CD4-positive, alpha-beta memory T cell (primary cell): ENCODE measurements at regions of chr1 and their contacts with region 1.

Region 1: DNA sequence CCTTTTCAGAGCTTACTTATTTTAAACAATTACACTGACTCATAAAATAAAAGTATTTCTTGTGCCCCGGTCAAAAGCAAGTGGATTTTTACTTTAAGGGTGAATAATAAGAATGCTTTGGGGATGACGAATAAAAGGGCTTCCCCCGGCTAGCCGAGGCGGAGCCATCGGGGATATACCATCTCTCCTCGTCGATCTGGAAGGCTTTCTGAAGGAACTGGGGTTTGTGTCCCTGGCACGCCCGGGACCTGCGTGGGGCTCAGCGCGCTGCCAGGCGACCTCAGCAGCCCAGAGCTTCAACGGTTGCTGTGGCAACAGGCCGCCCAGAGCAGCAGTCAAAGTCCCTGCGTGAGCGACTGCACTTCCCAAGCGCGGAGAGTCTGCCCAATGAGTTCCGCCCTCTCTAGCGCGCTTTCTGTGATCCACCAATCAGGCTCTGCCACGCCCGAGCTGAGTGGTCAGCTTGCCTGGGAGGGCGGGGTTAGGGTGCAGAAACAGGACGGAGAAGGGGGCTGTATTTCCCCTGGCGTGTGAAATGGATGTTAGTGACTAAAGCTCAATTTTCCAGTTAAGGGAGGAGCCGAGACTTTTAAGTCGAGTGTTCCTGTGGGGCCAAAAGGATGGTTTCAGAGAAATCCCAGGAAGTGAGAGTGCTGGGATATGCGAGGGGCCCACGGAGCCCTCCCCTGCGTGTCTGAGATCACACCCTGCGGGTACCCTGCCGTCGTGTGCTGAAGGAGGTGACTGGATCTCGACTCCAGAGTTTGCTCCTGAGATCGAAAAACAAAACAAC is 33.0 kb upstream of the MGST3 start:
- DNase-seq: peak; percentile 84 to 91 (median 86)
- H3K4me3 ChIP-seq: peak overlapping the region; percentile 59 to 71
- H3K4me3 Mint-ChIP-seq: peak overlapping the region; percentile 88 to 92 (median 90)
- H3K27ac ChIP-seq: peak overlapping the region; percentile 7
- H3K27ac Mint-ChIP-seq: peak overlapping the region; percentile 80 to 95 (median 91)
- H3K4me1 ChIP-seq: peaks cover 18% of the 10 kb centered on the region
- H3K4me1 Mint-ChIP-seq: peaks cover 18 to 30% (median 24%) of the 10 kb centered on the region in 4 donors
- H3K27me3 ChIP-seq: peaks cover 22% of the 10 kb centered on the region
- H3K27me3 Mint-ChIP-seq: peaks cover 17 to 30% of the 10 kb centered on the region in 2 donors

Region 2: GRCh38 chr1:165392634-165393571 is 205.2 kb before region 1 on chr1:
- CTCF ChIA-PET with region 1: interaction called, 275 read pairs
- POLR2A ChIA-PET with region 1: interaction called, 33 read pairs
- intact Hi-C with region 1: loop called (anchors 1 kb)
- DNase-seq: peak; percentile 91 to 93 (median 92)
- H3K4me3 ChIP-seq: peak overlapping the region in 1 of 2 donors; percentile 4
- H3K4me3 Mint-ChIP-seq: peak overlapping the region; percentile 63 to 84 (median 81)
- H3K27ac ChIP-seq: no peak overlapping the region
- H3K27ac Mint-ChIP-seq: peak overlapping the region; percentile 67 to 93 (median 83)
- H3K4me1 ChIP-seq: peaks cover 23% of the 10 kb centered on the region
- H3K4me1 Mint-ChIP-seq: peaks cover 14 to 26% (median 20%) of the 10 kb centered on the region in 4 donors
- H3K27me3 ChIP-seq: peaks cover 39% of the 10 kb centered on the region
- H3K27me3 Mint-ChIP-seq: peaks cover 40 to 53% of the 10 kb centered on the region in 2 donors

Region 3: DNA sequence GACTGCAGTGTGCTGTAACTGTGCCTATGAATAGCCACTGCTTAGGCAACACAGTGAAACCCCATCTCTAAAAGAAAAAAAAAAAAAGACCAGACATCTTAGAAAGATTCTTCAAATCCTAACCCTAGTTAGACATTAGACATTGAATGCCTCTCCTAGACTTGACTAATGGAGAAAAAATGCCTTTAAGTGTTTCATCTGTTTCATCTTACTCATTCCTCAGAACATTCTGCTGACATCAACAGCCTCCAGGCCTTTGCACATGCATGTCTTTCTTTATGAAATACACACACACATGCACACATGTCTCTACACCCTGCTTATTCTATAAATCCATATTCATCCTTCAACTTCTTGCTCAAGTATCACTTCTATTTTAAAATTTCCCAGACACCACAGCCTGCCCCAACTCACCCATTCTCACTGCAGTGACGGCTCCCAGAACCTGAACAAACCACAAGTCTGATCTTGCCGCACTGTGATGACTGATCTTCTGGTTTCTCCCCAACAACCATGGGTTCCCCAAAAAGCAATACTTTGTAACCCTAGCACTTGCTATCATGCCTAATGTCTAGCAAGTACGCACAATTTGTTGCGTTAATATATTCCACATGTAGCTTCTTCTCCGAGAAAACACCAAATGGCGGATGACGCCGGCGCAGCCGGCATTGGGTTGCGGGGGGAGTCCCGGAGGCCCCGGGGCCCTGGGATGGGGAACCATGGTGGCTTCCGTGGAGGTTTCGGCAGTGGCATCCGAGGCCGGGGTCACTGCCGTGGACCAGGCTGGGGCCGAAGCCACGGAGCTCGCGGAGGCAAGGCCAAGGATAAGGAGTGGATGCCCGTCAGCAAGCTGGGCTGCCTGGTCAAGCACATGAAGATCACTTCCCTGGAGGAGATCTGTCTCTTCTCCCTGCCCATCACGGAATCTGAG is 16.9 kb before region 1 on chr1:
- CTCF ChIA-PET with region 1: interaction called, 10 read pairs
- POLR2A ChIA-PET with region 1: no interaction called
- intact Hi-C with region 1: no loop called
- DNase-seq: no peak
- H3K4me3 ChIP-seq: no peak overlapping the region
- H3K4me3 Mint-ChIP-seq: peak overlapping the region in 1 of 8 donors; percentile 6
- H3K27ac ChIP-seq: no peak overlapping the region
- H3K27ac Mint-ChIP-seq: no peak overlapping the region
- H3K4me1 ChIP-seq: no peaks in the 10 kb centered on the region
- H3K4me1 Mint-ChIP-seq: no peaks in the 10 kb centered on the region
- H3K27me3 ChIP-seq: no peaks in the 10 kb centered on the region
- H3K27me3 Mint-ChIP-seq: peaks cover 9 to 17% of the 10 kb centered on the region in 2 donors

Region 4: GRCh38 chr1:165697881-165698760 is 100.0 kb after region 1 on chr1 and contains the start of gene ALDH9A1:
- CTCF ChIA-PET with region 1: interaction called, 23 read pairs
- POLR2A ChIA-PET with region 1: interaction called, 3 read pairs
- intact Hi-C with region 1: loop called (anchors 2 kb)
- DNase-seq: peak; percentile 86 to 91 (median 87)
- H3K4me3 ChIP-seq: peak within 1 kb of the TSS; percentile 95 to 97
- H3K4me3 Mint-ChIP-seq: peak within 1 kb of the TSS; percentile 92 to 100 (median 98)
- H3K27ac ChIP-seq: peak within 1 kb of the TSS; percentile 79
- H3K27ac Mint-ChIP-seq: peak within 1 kb of the TSS; percentile 91 to 99 (median 97)
- H3K4me1 ChIP-seq: peaks cover 21% of the 10 kb centered on the region
- H3K4me1 Mint-ChIP-seq: peaks cover 15 to 39% (median 27%) of the 10 kb centered on the region in 4 donors
- H3K27me3 ChIP-seq: no peaks in the 10 kb centered on the region
- H3K27me3 Mint-ChIP-seq: no peaks in the 10 kb centered on the region
- total RNA-seq, gene ALDH9A1: 45.2 to 47.1 TPM

Region 5: GRCh38 chr1:165793951-165794350 is 195.9 kb after region 1 on chr1:
- CTCF ChIA-PET with region 1: no interaction called
- POLR2A ChIA-PET with region 1: no interaction called
- intact Hi-C with region 1: no loop called
- DNase-seq: no peak
- H3K4me3 ChIP-seq: no peak overlapping the region
- H3K4me3 Mint-ChIP-seq: no peak overlapping the region
- H3K27ac ChIP-seq: no peak overlapping the region
- H3K27ac Mint-ChIP-seq: no peak overlapping the region
- H3K4me1 ChIP-seq: no peaks in the 10 kb centered on the region
- H3K4me1 Mint-ChIP-seq: no peaks in the 10 kb centered on the region
- H3K27me3 ChIP-seq: no peaks in the 10 kb centered on the region
- H3K27me3 Mint-ChIP-seq: peaks cover 6 to 13% of the 10 kb centered on the region in 2 donors

Region 6: DNA sequence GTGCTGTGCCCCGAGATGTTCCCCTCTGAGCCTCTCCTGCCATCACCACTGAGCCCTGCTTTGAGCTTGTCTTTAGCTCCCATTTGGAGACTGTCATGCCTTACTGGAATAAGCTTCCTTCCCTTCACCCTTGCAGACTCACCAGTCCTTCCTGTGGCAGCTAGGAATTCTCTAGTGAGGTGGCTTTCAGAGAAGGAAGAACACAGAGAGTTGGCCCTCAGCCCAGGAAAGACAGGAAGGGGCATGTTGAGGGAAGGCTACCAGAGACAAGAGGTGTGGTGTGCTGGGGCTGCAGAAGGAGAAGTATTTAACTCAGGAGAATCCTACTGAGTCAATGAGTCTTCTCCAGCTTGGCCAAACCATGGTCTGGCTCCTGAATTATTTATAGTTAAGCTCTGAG is 305.6 kb after region 1 on chr1:
- CTCF ChIA-PET with region 1: interaction called, 321 read pairs
- POLR2A ChIA-PET with region 1: no interaction called
- intact Hi-C with region 1: no loop called
- DNase-seq: no peak
- H3K4me3 ChIP-seq: no peak overlapping the region
- H3K4me3 Mint-ChIP-seq: no peak overlapping the region
- H3K27ac ChIP-seq: no peak overlapping the region
- H3K27ac Mint-ChIP-seq: no peak overlapping the region
- H3K4me1 ChIP-seq: no peaks in the 10 kb centered on the region
- H3K4me1 Mint-ChIP-seq: peaks cover 0 to 5% (median 0%) of the 10 kb centered on the region in 4 donors
- H3K27me3 ChIP-seq: no peaks in the 10 kb centered on the region
- H3K27me3 Mint-ChIP-seq: no peaks in the 10 kb centered on the region

Region 7: GRCh38 chr1:166479052-166479631 is 881.1 kb after region 1 on chr1:
- CTCF ChIA-PET with region 1: interaction called, 4 read pairs
- POLR2A ChIA-PET with region 1: no interaction called
- intact Hi-C with region 1: loop called (anchors 1 kb)
- DNase-seq: peak; percentile 26 to 39 (median 38)
- H3K4me3 ChIP-seq: no peak overlapping the region
- H3K4me3 Mint-ChIP-seq: no peak overlapping the region
- H3K27ac ChIP-seq: no peak overlapping the region
- H3K27ac Mint-ChIP-seq: no peak overlapping the region
- H3K4me1 ChIP-seq: no peaks in the 10 kb centered on the region
- H3K4me1 Mint-ChIP-seq: peaks cover 0 to 2% (median 0%) of the 10 kb centered on the region in 4 donors
- H3K27me3 ChIP-seq: no peaks in the 10 kb centered on the region
- H3K27me3 Mint-ChIP-seq: no peaks in the 10 kb centered on the region